ENCODE measurements at regions of chr22 and their contacts with region 1.

Region 1: GRCh38 chr22:28829358-28830181 is 29.2 kb upstream of the XBP1 start:
- DNase-seq: peak; percentile 52 to 87 (median 75)
- ATAC-seq: peak; percentile 83
- H3K4me3 ChIP-seq: no peak overlapping the region
- H3K4me3 Mint-ChIP-seq: no peak overlapping the region
- H3K27ac ChIP-seq: no peak overlapping the region
- H3K27ac Mint-ChIP-seq: no peak overlapping the region
- H3K4me1 ChIP-seq: peaks cover 10% of the 10 kb centered on the region
- H3K4me1 Mint-ChIP-seq: peaks cover 14% of the 10 kb centered on the region
- H3K27me3 ChIP-seq: no peaks in the 10 kb centered on the region
- H3K27me3 Mint-ChIP-seq: no peaks in the 10 kb centered on the region
- CTCF ChIP-seq: peak; percentile 99

Region 2: GRCh38 chr22:28600546-28601143 is 228.9 kb before region 1 on chr22:
- CTCF ChIA-PET with region 1: interaction called, 139 read pairs
- POLR2A ChIA-PET with region 1: interaction called, 5 read pairs
- intact Hi-C with region 1: loop called (anchors 1 kb)
- DNase-seq: peak in 3 of 9 experiments; percentile 14 to 69 (median 58)
- ATAC-seq: peak; percentile 38
- H3K4me3 ChIP-seq: no peak overlapping the region
- H3K4me3 Mint-ChIP-seq: no peak overlapping the region
- H3K27ac ChIP-seq: no peak overlapping the region
- H3K27ac Mint-ChIP-seq: no peak overlapping the region
- H3K4me1 ChIP-seq: no peaks in the 10 kb centered on the region
- H3K4me1 Mint-ChIP-seq: no peaks in the 10 kb centered on the region
- H3K27me3 ChIP-seq: peaks cover 0 to 2% of the 10 kb centered on the region in 2 experiments
- H3K27me3 Mint-ChIP-seq: peaks cover 24% of the 10 kb centered on the region
- CTCF ChIP-seq: peak; percentile 58

Region 3: DNA sequence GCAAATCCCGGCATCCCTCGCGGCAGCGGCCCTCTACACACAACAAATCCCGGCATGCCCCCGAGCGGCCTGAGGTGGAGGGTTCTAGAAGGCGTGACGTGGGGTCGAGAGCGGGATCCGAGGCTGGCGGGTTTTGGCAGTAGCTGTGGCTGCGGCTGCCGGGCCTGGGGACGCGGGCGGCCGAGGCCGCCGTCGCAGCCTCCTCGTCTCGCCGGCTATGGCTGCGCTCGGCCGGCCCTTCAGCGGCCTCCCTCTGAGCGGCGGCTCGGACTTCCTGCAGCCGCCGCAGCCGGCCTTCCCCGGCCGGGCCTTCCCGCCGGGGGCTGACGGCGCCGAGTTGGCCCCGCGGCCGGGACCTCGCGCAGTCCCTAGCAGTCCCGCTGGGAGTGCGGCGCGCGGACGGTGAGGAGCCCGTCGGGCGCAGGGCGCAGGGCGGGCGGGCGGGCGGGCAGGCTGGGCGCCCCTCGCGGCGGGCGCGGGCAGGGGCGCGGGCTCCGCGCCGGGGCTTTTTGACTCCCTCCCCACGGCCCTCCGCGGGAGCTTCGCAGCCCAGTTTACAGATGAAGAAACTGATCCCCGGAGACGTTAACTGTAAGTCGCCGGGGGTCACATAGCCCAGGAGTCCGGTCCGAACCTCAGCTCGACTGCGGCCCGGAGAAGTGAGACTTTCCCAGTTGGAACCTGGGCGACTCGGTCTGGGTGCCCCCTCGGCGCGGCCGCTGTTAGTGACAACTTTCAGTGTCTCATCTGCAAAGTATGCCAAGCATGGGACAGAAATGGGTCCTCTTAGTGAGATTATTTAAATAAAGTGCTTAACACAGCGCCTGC is 56.7 kb before region 1 on chr22 and contains the start of gene CCDC117:
- CTCF ChIA-PET with region 1: interaction called, 14 read pairs
- POLR2A ChIA-PET with region 1: no interaction called
- intact Hi-C with region 1: loop called (anchors 1 to 10 kb)
- DNase-seq: peak; percentile 85 to 96 (median 94)
- ATAC-seq: peak; percentile 94
- H3K4me3 ChIP-seq: peak within 1 kb of the TSS; percentile 60 to 65
- H3K4me3 Mint-ChIP-seq: peak within 1 kb of the TSS; percentile 94
- H3K27ac ChIP-seq: peak within 1 kb of the TSS; percentile 68 to 77
- H3K27ac Mint-ChIP-seq: peak within 1 kb of the TSS; percentile 94
- H3K4me1 ChIP-seq: peaks cover 26% of the 10 kb centered on the region
- H3K4me1 Mint-ChIP-seq: peaks cover 30% of the 10 kb centered on the region
- H3K27me3 ChIP-seq: no peaks in the 10 kb centered on the region
- H3K27me3 Mint-ChIP-seq: no peaks in the 10 kb centered on the region
- CTCF ChIP-seq: peak; percentile 31
- total RNA-seq, gene CCDC117: 13.7 to 15.4 TPM

Region 4: GRCh38 chr22:28800308-28801077 is 29.1 kb before region 1 on chr22 and contains the start of gene XBP1:
- CTCF ChIA-PET with region 1: interaction called, 74 read pairs
- POLR2A ChIA-PET with region 1: interaction called, 11 read pairs
- intact Hi-C with region 1: loop called (anchors 1 to 2 kb)
- DNase-seq: peak; percentile 78 to 95 (median 87)
- ATAC-seq: peak; percentile 87
- H3K4me3 ChIP-seq: peak within 1 kb of the TSS; percentile 79 to 99
- H3K4me3 Mint-ChIP-seq: peak within 1 kb of the TSS; percentile 84
- H3K27ac ChIP-seq: peak within 1 kb of the TSS; percentile 85 to 97
- H3K27ac Mint-ChIP-seq: peak within 1 kb of the TSS; percentile 98
- H3K4me1 ChIP-seq: peaks cover 42% of the 10 kb centered on the region
- H3K4me1 Mint-ChIP-seq: peaks cover 49% of the 10 kb centered on the region
- H3K27me3 ChIP-seq: no peaks in the 10 kb centered on the region
- H3K27me3 Mint-ChIP-seq: no peaks in the 10 kb centered on the region
- CTCF ChIP-seq: no peak
- total RNA-seq, gene XBP1: 207 to 212 TPM

Region 5: GRCh38 chr22:28846994-28847393 is 17.4 kb after region 1 on chr22:
- CTCF ChIA-PET with region 1: interaction called, 10 read pairs
- POLR2A ChIA-PET with region 1: no interaction called
- intact Hi-C with region 1: no loop called
- DNase-seq: no peak
- ATAC-seq: no peak
- H3K4me3 ChIP-seq: no peak overlapping the region
- H3K4me3 Mint-ChIP-seq: no peak overlapping the region
- H3K27ac ChIP-seq: no peak overlapping the region
- H3K27ac Mint-ChIP-seq: no peak overlapping the region
- H3K4me1 ChIP-seq: no peaks in the 10 kb centered on the region
- H3K4me1 Mint-ChIP-seq: no peaks in the 10 kb centered on the region
- H3K27me3 ChIP-seq: no peaks in the 10 kb centered on the region
- H3K27me3 Mint-ChIP-seq: no peaks in the 10 kb centered on the region
- CTCF ChIP-seq: no peak